ENCODE measurements at regions of chrX and their contacts with region 1.

Region 1: GRCh38 chrX:19698125-19698524 is 182.8 kb upstream of the MAP3K15 start:
- DNase-seq: no peak
- H3K4me3 Mint-ChIP-seq: no peak overlapping the region
- H3K27ac Mint-ChIP-seq: no peak overlapping the region
- H3K4me1 Mint-ChIP-seq: peaks cover 16% of the 10 kb centered on the region
- H3K27me3 Mint-ChIP-seq: no peaks in the 10 kb centered on the region

Region 2: DNA sequence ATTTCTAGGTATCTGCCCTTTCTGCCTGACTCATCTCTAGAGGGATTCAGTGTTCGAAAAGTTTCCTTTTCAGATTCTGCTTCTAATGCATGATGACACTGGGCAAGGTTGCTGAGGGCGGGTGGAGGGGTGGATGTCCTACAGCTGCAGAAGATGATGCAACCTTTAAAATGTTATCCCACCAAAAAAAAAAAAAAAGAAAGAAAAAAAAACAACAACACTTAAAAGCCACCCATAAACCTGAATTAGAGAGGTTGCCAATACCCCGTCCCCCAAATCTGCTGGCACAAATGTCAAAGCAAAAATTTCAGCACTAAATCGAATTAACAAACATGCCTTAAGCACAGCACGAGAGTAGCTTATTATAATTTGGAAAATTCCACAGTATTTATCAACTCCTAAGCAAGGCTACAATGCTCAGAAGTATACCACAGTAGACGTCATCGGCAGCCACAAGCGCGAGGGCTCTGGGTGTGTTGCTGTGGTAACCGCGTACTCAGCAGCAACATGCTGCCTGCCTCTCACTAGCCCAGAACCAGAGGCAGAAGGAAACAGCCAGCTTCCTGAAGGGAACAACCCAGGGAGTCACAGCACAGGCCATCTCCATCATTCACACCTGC is 15.3 kb before region 1 on chrX:
- CTCF ChIA-PET with region 1: interaction called, 11 read pairs
- POLR2A ChIA-PET with region 1: no interaction called
- DNase-seq: peak; percentile 84
- H3K4me3 Mint-ChIP-seq: peak overlapping the region; percentile 58
- H3K27ac Mint-ChIP-seq: peak overlapping the region; percentile 94
- H3K4me1 Mint-ChIP-seq: peaks cover 82% of the 10 kb centered on the region
- H3K27me3 Mint-ChIP-seq: no peaks in the 10 kb centered on the region

Region 3: GRCh38 chrX:19776753-19777152 is 78.6 kb after region 1 on chrX:
- CTCF ChIA-PET with region 1: no interaction called
- POLR2A ChIA-PET with region 1: no interaction called
- DNase-seq: peak; percentile 67
- H3K4me3 Mint-ChIP-seq: peak overlapping the region; percentile 0
- H3K27ac Mint-ChIP-seq: peak overlapping the region; percentile 26
- H3K4me1 Mint-ChIP-seq: peaks cover 64% of the 10 kb centered on the region
- H3K27me3 Mint-ChIP-seq: no peaks in the 10 kb centered on the region